IMR-90 (cell line): ENCODE measurements at regions of chr17 and their contacts with region 1.

Region 1: GRCh38 chr17:28335201-28335955 is at the starts of genes IFT20 and TNFAIP1:
- DNase-seq: peak; percentile 100
- ATAC-seq: peak; percentile 93
- H3K4me3 ChIP-seq: peak within 1 kb of the TSS; percentile 59
- H3K27ac ChIP-seq: peak within 1 kb of the TSS; percentile 65
- H3K4me1 ChIP-seq: peaks cover 13% of the 10 kb centered on the region
- H3K27me3 ChIP-seq: no peaks in the 10 kb centered on the region
- CTCF ChIP-seq: 0 out of 2 replicates have a peak, but pooled peaks have one; percentile 2
- POLR2A ChIP-seq: peak; percentile 98
- RAD21 ChIP-seq: peak; percentile 4; the same call in 1 of the 2 replicates
- total RNA-seq, gene IFT20: 25.5 and 37.8 TPM in 2 replicates
- total RNA-seq, gene TNFAIP1: 45.3 and 49.1 TPM in 2 replicates

Region 2: DNA sequence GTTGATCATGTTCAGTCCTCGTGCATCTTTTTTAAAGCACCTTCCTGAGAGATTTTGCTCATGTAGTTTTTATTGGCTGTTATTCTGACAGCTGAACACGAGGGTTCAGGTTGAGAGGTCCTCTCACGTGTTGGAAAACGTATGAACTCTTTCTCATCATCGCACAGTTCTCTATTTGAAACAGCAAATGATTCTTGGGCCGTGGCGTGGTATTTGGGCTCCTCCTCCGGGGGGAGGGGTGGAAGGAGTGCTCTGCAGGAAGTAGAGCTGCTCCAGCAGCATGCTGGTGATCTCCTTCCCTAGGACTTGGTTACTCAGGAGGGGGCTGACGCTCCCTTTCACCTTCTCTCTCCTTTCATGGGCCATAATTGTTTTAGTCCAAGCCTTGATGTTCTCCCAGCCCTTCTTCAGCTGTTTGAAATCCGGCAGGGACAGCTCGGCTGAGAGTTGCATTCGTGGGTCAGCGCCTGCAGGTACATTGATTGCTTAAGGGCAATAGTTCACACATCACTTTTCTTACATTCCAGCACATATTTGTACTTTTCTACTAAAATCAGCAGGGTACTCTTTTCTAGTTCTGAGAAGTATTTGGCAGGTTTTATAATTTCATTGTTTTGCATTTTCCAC is 808.7 kb before region 1 on chr17:
- CTCF ChIA-PET with region 1: no interaction called
- POLR2A ChIA-PET with region 1: no interaction called
- dilution Hi-C with region 1: no loop called
- in situ Hi-C with region 1: loop called (anchors 25 kb)
- intact Hi-C with region 1: no loop called
- DNase-seq: peak; percentile 61
- ATAC-seq: peak; percentile 74
- H3K4me3 ChIP-seq: no peak overlapping the region
- H3K27ac ChIP-seq: no peak overlapping the region
- H3K4me1 ChIP-seq: peaks cover 40% of the 10 kb centered on the region
- H3K27me3 ChIP-seq: no peaks in the 10 kb centered on the region
- CTCF ChIP-seq: no peak
- POLR2A ChIP-seq: no peak
- RAD21 ChIP-seq: no peak

Region 3: GRCh38 chr17:28230011-28230410 is 105.4 kb before region 1 on chr17:
- CTCF ChIA-PET with region 1: interaction called, 4 read pairs
- POLR2A ChIA-PET with region 1: no interaction called
- dilution Hi-C with region 1: no loop called
- in situ Hi-C with region 1: no loop called
- intact Hi-C with region 1: loop called (anchors 5 kb)
- DNase-seq: no peak
- ATAC-seq: no peak
- H3K4me3 ChIP-seq: no peak overlapping the region
- H3K27ac ChIP-seq: no peak overlapping the region
- H3K4me1 ChIP-seq: peaks cover 3% of the 10 kb centered on the region; the same call in 1 of the 2 replicates
- H3K27me3 ChIP-seq: peaks cover 48% of the 10 kb centered on the region
- CTCF ChIP-seq: no peak
- POLR2A ChIP-seq: no peak
- RAD21 ChIP-seq: no peak

Region 4: GRCh38 chr17:28252436-28252835 is 82.9 kb before region 1 on chr17:
- CTCF ChIA-PET with region 1: interaction called, 3 read pairs
- POLR2A ChIA-PET with region 1: no interaction called
- dilution Hi-C with region 1: no loop called
- in situ Hi-C with region 1: no loop called
- intact Hi-C with region 1: loop called (anchors 5 kb)
- DNase-seq: peak; percentile 62
- ATAC-seq: peak; percentile 13; the same call in 1 of the 2 replicates
- H3K4me3 ChIP-seq: no peak overlapping the region
- H3K27ac ChIP-seq: no peak overlapping the region
- H3K4me1 ChIP-seq: no peaks in the 10 kb centered on the region
- H3K27me3 ChIP-seq: peaks cover 20% of the 10 kb centered on the region
- CTCF ChIP-seq: no peak
- POLR2A ChIP-seq: no peak
- RAD21 ChIP-seq: no peak